ENCODE measurements at regions of chr3 and their contacts with region 1.

Region 1: DNA sequence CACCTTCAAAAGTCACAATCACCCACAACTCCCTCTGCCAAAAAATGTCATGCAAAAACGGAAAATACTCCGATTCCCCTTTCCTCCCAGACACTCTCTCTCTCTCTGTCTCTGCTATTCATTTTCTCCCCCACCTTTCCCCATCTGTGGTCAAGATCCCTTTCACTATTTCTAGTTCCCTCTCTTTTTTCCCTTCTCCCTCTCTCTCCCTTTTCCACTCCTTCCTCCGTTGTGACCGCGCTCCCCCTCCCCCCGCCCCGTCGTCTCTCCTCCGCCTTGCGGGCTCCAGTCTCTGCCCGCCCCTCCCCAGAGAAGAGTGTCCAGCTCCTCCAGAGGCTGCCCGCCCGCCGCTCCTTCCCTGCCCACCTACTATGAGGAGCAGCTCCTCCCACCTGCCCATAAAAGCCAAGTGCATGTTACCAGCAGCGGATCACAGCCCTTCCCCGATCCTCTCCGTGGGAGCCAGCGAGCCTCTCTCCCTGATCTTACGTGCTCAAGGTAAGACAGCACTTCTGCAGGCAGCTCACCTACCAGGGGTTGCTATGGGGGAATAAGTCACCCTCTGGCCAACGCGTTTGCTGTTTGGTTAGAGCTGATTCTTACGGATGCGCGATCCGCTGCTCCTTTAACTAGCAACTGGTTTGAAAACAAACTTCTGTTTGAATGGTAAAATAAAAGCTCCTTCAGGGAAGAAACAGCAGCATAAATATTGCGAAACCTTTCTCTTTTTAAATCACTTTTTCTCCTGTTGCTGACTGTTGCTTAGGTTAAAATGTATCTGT is at the start of gene COL8A1:
- DNase-seq: peak; percentile 81
- H3K4me3 Mint-ChIP-seq: peak within 1 kb of the TSS; percentile 85
- H3K27ac Mint-ChIP-seq: peak within 1 kb of the TSS; percentile 86
- H3K4me1 Mint-ChIP-seq: peaks cover 53% of the 10 kb centered on the region
- H3K27me3 Mint-ChIP-seq: no peaks in the 10 kb centered on the region
- CTCF ChIP-seq: no peak
- total RNA-seq, gene COL8A1: 29.1 and 112 TPM in 2 replicates

Region 2: GRCh38 chr3:99023590-99024192 is 614.7 kb before region 1 on chr3:
- CTCF ChIA-PET with region 1: interaction called, 3 read pairs
- POLR2A ChIA-PET with region 1: no interaction called
- intact Hi-C with region 1: loop called (anchors 5 kb)
- DNase-seq: peak; percentile 55
- H3K4me3 Mint-ChIP-seq: no peak overlapping the region
- H3K27ac Mint-ChIP-seq: no peak overlapping the region
- H3K4me1 Mint-ChIP-seq: no peaks in the 10 kb centered on the region
- H3K27me3 Mint-ChIP-seq: no peaks in the 10 kb centered on the region
- CTCF ChIP-seq: peak; percentile 62

Region 3: DNA sequence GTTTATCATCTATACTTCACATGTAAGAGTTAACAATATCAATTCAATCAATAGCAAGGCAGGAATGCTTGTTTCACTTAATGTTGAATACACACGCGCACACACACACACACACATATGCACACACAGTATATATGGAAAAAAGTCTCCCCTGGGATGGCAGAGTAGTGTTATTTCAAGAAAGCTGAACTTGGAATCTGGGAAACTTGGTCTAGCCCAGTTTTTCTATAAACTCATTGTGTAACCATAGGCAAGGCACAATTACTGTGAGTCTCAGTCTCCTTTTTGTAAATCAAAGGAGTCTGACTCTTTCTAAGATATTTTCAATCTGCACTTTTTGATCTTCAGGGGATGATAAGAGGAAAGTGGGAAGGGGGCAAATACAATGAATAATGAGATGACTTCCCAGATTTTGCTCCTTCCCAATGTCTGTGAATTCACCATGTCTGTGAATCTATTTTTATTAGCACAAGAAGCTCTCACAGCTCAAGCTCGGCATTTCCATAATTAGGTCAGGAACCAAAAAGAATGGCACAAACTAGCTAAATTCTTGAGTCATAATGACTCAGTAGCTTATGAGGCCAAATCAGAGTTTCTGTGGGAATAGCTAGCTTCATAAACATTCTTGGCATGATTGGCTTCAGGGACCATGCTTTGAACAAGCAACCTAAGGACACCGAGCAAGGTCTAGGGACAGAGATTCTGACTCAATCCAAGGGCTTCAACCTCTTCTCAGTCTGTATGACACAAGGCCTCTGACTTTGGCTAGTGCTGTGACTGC is 509.4 kb before region 1 on chr3:
- CTCF ChIA-PET with region 1: interaction called, 4 read pairs
- POLR2A ChIA-PET with region 1: no interaction called
- intact Hi-C with region 1: loop called (anchors 2 kb)
- DNase-seq: peak; percentile 88
- H3K4me3 Mint-ChIP-seq: no peak overlapping the region
- H3K27ac Mint-ChIP-seq: peak overlapping the region; percentile 86
- H3K4me1 Mint-ChIP-seq: peaks cover 11% of the 10 kb centered on the region
- H3K27me3 Mint-ChIP-seq: no peaks in the 10 kb centered on the region
- CTCF ChIP-seq: no peak

Region 4: DNA sequence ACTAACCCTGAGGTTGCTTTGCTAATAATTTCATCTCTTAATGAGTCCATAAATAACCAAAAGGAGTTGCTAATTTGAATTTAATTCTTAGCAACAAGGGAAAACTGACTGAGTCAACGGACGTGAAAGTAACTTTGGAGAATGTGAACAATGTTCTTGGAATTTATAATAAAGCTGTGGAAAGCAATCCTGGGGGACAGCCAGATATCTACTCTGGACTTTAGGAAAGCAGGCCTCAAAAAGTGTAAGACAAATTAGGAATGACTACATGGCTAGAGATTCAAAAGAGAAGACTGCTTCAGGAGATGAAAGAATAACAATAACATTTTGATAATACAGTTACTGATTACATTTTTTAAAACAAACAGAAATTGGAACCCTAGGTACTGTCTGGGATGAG is 318.4 kb before region 1 on chr3:
- CTCF ChIA-PET with region 1: no interaction called
- POLR2A ChIA-PET with region 1: no interaction called
- intact Hi-C with region 1: no loop called
- DNase-seq: peak; percentile 37
- H3K4me3 Mint-ChIP-seq: no peak overlapping the region
- H3K27ac Mint-ChIP-seq: peak overlapping the region; percentile 69
- H3K4me1 Mint-ChIP-seq: peaks cover 40% of the 10 kb centered on the region
- H3K27me3 Mint-ChIP-seq: no peaks in the 10 kb centered on the region
- CTCF ChIP-seq: no peak

Region 5: DNA sequence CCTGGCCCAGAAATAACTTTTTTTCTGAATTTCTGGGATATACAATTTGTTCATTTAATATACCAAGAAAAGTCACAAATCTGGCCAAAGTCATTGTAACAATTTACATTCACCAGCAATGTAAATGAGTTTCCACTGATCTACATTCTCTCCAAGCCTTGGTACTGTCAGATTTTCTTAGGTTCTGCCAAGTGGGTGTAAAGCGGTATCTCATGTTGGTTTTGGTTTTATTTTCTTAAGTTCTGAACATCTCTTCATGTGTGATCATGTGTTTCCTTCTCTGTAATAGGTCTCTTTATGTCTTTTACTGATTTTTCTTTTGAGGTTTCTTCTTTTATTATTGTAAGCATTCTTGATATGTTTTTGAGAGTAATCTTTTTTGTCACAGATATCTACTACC is 235.6 kb before region 1 on chr3:
- CTCF ChIA-PET with region 1: no interaction called
- POLR2A ChIA-PET with region 1: no interaction called
- intact Hi-C with region 1: no loop called
- DNase-seq: no peak
- H3K4me3 Mint-ChIP-seq: no peak overlapping the region
- H3K27ac Mint-ChIP-seq: no peak overlapping the region
- H3K4me1 Mint-ChIP-seq: peaks cover 5% of the 10 kb centered on the region
- H3K27me3 Mint-ChIP-seq: no peaks in the 10 kb centered on the region
- CTCF ChIP-seq: no peak

Region 6: DNA sequence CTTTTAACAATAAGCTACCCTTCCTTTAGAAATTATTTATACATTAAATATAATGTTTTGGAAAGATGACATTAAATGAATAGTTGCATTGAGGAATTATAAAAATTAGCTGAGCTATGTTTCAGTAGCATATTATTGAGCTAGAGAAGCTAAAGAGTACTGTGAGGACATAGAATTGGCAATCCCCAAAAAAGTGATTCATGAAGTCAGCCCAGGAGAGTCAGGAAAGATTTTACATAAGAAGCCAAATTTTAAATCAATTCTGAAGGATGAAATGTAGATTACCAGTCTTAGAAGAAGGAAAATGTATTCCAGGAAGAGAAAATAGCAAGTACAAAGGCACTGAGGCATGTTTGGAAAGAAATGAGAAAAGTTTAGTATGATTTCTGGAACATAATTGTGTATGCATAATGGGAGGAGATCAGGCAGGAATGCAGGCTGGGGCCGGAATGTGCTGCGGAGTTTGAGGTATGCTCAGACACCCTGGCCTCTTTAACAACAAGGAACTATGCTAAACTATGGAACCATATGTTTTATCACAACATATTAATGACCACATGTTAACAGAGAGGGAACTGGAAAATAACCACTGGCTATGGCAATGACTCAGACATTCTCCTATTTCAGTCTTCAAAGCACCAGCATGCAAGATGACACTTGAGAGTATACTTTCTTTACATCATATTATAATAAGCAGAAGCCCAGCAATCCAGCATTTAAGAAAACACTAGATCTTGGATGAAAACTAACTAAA is 103.2 kb before region 1 on chr3:
- CTCF ChIA-PET with region 1: interaction called, 5 read pairs
- POLR2A ChIA-PET with region 1: interaction called, 7 read pairs
- intact Hi-C with region 1: loop called (anchors 5 kb)
- DNase-seq: peak; percentile 79
- H3K4me3 Mint-ChIP-seq: no peak overlapping the region
- H3K27ac Mint-ChIP-seq: peak overlapping the region; percentile 50
- H3K4me1 Mint-ChIP-seq: peaks cover 26% of the 10 kb centered on the region
- H3K27me3 Mint-ChIP-seq: no peaks in the 10 kb centered on the region
- CTCF ChIP-seq: no peak

Region 7: DNA sequence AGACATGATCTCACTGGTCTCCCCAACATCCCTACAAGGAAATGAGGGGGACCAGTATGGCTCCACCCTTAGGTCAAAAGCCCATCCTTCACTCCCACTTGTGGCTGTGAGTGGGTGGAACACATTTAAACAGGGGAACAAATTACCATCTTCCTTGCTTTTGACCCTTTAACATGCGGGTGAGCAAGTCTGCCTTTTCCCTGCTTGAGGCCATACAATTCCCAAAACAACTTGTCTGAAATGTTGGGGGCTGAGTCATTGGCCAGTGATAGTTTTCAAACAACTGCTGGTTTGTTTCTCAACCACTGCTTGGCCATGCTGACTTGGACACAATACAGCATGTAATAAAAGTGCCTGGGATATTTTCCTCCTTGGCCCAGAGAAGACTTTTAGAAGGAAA is 39.7 kb after region 1 on chr3:
- CTCF ChIA-PET with region 1: interaction called, 209 read pairs
- POLR2A ChIA-PET with region 1: interaction called, 47 read pairs
- intact Hi-C with region 1: no loop called
- DNase-seq: peak; percentile 77
- H3K4me3 Mint-ChIP-seq: no peak overlapping the region
- H3K27ac Mint-ChIP-seq: peak overlapping the region; percentile 72
- H3K4me1 Mint-ChIP-seq: peaks cover 44% of the 10 kb centered on the region
- H3K27me3 Mint-ChIP-seq: no peaks in the 10 kb centered on the region
- CTCF ChIP-seq: no peak